Natural killer cell (primary cell): ENCODE measurements at regions of chr3 and their contacts with region 1.

Region 1: DNA sequence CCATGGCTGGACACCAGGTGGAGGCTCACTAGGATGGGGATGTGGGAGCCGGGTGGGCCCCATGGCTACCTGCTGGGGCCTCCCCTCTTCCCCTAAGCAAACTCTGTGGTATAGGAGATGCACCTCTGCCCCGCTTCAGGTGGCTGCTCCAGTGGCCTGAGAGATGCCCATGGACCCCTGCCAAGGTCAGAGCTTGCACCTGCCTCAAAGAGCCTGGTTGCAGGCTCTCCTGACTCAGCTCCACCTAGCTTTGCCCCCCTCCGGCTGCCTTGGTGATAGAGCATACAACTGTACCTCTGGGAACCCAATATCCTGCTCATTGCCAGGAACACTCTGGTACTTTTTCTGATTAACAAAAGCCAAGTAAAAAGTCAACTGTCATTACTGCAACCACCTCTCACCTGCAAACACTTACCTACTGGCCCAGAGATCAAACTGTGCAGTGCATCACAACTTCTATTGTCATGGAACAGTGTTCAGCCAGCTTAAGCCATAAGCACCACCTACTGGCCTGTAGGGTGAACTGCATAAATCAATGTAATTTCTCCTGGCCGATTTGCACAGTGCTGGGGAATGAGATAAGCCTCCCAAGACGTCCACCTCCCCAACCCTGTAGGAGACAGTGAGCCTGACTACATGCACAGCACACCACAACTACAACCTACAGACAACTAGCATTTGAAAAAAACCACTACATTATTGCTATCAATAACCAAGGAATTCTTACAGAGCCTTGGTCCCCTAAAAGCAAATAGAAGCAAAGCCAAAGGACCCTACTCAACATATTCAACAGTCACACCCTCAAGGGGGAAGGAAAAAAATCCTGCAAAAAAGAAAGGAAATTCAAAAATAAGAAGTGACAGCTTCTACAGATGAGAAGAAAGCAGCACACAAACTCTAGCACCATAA is 352.4 kb upstream of the ARHGEF26 start:
- DNase-seq: peak in 1 of 2 donors; percentile 78
- ATAC-seq: peak; percentile 88 to 99 (median 95)
- H3K4me3 ChIP-seq: no peak overlapping the region
- H3K4me3 Mint-ChIP-seq: no peak overlapping the region
- H3K27ac ChIP-seq: no peak overlapping the region
- H3K27ac Mint-ChIP-seq: no peak overlapping the region
- H3K4me1 ChIP-seq: no peaks in the 10 kb centered on the region
- H3K4me1 Mint-ChIP-seq: peaks cover 5 to 7% of the 10 kb centered on the region in 2 donors
- H3K27me3 ChIP-seq: no peaks in the 10 kb centered on the region
- H3K27me3 Mint-ChIP-seq: peaks cover 19 to 44% of the 10 kb centered on the region in 2 donors
- CTCF ChIP-seq: peak; percentile 79

Region 2: DNA sequence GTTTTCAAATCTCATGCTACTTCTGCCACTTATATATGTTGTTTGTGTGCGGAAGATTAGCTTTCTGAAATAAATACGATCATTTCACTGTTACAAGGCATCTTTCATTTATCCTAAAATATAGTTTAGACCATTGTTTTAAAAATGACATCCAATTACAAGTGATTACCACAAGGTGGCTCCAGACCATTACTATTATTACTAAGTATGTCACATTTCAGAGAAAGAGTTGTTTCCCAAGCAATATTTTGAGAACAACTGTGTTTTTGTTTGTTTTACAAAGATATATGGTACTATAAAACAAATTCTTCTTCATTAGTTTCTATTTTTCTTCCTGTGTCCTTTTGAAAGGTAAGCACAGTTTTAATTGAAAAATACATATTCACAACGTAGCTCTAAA is 742.8 kb before region 1 on chr3:
- intact Hi-C with region 1: loop called (anchors 1 kb)
- DNase-seq: peak in 1 of 2 donors; percentile 59
- ATAC-seq: peak in 2 of 3 donors; percentile 41 to 52
- H3K4me3 ChIP-seq: no peak overlapping the region
- H3K4me3 Mint-ChIP-seq: no peak overlapping the region
- H3K27ac ChIP-seq: no peak overlapping the region
- H3K27ac Mint-ChIP-seq: no peak overlapping the region
- H3K4me1 ChIP-seq: no peaks in the 10 kb centered on the region
- H3K4me1 Mint-ChIP-seq: no peaks in the 10 kb centered on the region
- H3K27me3 ChIP-seq: no peaks in the 10 kb centered on the region
- H3K27me3 Mint-ChIP-seq: peaks cover 0 to 2% of the 10 kb centered on the region in 2 donors
- CTCF ChIP-seq: peak; percentile 78

Region 3: DNA sequence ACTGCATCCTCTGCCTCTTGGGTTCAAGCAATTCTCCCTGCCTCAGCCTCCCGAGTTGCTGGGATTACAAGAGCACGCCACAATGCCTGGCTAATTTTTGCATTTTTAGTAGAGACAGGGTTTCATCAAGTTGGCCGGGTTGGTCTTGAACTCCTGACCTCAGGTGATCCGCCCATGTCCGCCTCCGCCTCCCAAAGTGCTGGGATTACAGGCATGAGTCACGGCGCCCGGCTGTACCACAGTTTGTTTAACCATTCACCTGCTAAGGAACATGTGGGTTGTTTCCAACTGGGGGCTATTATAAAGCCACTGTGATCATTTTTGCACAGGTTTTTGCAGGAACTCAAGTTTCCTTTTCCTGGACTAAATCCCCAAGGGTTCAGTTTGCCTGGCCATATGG is 730.0 kb before region 1 on chr3:
- intact Hi-C with region 1: loop called (anchors 1 kb)
- DNase-seq: no peak
- ATAC-seq: no peak
- H3K4me3 ChIP-seq: no peak overlapping the region
- H3K4me3 Mint-ChIP-seq: no peak overlapping the region
- H3K27ac ChIP-seq: no peak overlapping the region
- H3K27ac Mint-ChIP-seq: no peak overlapping the region
- H3K4me1 ChIP-seq: peaks cover 9% of the 10 kb centered on the region
- H3K4me1 Mint-ChIP-seq: peaks cover 6% of the 10 kb centered on the region in 2 donors
- H3K27me3 ChIP-seq: no peaks in the 10 kb centered on the region
- H3K27me3 Mint-ChIP-seq: peaks cover 5 to 11% of the 10 kb centered on the region in 2 donors
- CTCF ChIP-seq: no peak

Region 4: DNA sequence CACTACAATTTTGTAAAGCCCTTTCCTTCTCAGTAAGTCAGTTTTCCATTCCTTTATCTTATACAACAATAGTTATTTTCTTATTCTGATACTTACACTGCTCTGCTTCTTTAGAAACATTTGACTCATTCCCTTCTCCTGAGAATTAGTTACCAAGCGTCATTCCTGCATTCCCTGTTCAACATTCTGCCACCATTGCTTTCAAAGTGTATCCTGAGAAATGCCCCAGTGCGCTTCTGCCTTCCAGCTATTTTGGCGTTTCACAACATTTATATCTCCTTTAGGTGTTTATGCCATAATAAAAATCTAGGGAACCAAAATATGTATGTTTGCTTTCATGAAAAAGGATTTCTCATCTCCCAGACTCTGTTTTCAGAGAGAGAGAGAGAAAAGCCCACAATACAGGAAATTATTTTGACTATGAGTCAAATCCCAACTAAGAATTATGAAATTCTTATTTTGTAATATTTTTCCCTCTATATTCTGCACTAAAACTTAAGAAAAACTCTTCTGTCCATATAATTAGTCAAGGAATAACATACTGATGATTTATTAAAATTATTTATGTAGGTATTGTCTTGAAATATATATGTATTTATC is 725.0 kb before region 1 on chr3:
- intact Hi-C with region 1: loop called (anchors 1 kb)
- DNase-seq: no peak
- ATAC-seq: no peak
- H3K4me3 ChIP-seq: no peak overlapping the region
- H3K4me3 Mint-ChIP-seq: no peak overlapping the region
- H3K27ac ChIP-seq: no peak overlapping the region
- H3K27ac Mint-ChIP-seq: no peak overlapping the region
- H3K4me1 ChIP-seq: peaks cover 2% of the 10 kb centered on the region
- H3K4me1 Mint-ChIP-seq: no peaks in the 10 kb centered on the region
- H3K27me3 ChIP-seq: no peaks in the 10 kb centered on the region
- H3K27me3 Mint-ChIP-seq: peaks cover 3 to 16% of the 10 kb centered on the region in 2 donors
- CTCF ChIP-seq: no peak

Region 5: DNA sequence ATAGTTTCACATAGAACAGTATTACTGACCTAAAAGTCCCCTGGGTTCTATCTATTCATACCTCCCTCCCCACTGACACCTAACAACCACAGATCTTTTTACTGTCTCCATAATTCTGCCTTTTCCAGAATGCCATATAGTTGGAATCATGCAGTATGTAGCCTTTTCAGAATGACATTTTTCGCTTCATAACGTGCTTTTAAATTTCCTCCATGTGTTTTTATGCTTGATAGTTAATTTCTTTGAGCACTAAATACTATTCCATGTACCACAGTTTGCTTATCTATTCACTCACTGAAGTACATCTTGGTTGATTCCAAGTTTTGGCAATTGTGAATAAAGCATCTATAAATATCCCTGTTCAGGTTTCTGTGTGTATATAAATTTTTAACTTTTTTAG is 738.9 kb after region 1 on chr3:
- intact Hi-C with region 1: no loop called
- DNase-seq: no peak
- ATAC-seq: no peak
- H3K4me3 ChIP-seq: no peak overlapping the region
- H3K4me3 Mint-ChIP-seq: no peak overlapping the region
- H3K27ac ChIP-seq: no peak overlapping the region
- H3K27ac Mint-ChIP-seq: no peak overlapping the region
- H3K4me1 ChIP-seq: no peaks in the 10 kb centered on the region
- H3K4me1 Mint-ChIP-seq: no peaks in the 10 kb centered on the region
- H3K27me3 ChIP-seq: no peaks in the 10 kb centered on the region
- H3K27me3 Mint-ChIP-seq: no peaks in the 10 kb centered on the region
- CTCF ChIP-seq: no peak